Pancreas (tissue), 10 donors: ENCODE measurements at regions of chr22 and their contacts with region 1.

Region 1: GRCh38 chr22:36454916-36455570 is 26.4 kb downstream of the TXN2 start:
- DNase-seq: peak; percentile 92 to 97 (median 95)
- ATAC-seq: peak; percentile 67 to 85 (median 78)
- H3K4me3 ChIP-seq: peak overlapping the region; percentile 14 to 56 (median 30)
- H3K27ac ChIP-seq: peak overlapping the region; percentile 74 to 98 (median 93)
- H3K4me1 ChIP-seq: peaks cover 20 to 48% (median 26%) of the 10 kb centered on the region in 3 donors
- H3K27me3 ChIP-seq: no peaks in the 10 kb centered on the region
- CTCF ChIP-seq: no peak

Region 2: GRCh38 chr22:36409911-36410756 is 44.9 kb before region 1 on chr22:
- intact Hi-C with region 1: loop called in 1 of 3 experiments (anchors 10 kb)
- DNase-seq: peak; percentile 92 to 99 (median 98)
- ATAC-seq: peak; percentile 92 to 96 (median 94)
- H3K4me3 ChIP-seq: peak overlapping the region in 3 of 4 donors; percentile 7 to 30 (median 28)
- H3K27ac ChIP-seq: peak overlapping the region; percentile 93 to 97 (median 96)
- H3K4me1 ChIP-seq: peaks cover 19 to 28% (median 24%) of the 10 kb centered on the region in 3 donors
- H3K27me3 ChIP-seq: no peaks in the 10 kb centered on the region
- CTCF ChIP-seq: peak in 2 of 4 donors; percentile 32 to 33

Region 3: GRCh38 chr22:36419912-36420761 is 34.9 kb before region 1 on chr22:
- intact Hi-C with region 1: no loop called
- DNase-seq: no peak
- ATAC-seq: peak in 1 of 4 donors; percentile 5
- H3K4me3 ChIP-seq: no peak overlapping the region
- H3K27ac ChIP-seq: peak overlapping the region in 3 of 4 donors; percentile 26 to 71 (median 66)
- H3K4me1 ChIP-seq: peaks cover 0 to 29% (median 6%) of the 10 kb centered on the region in 3 donors
- H3K27me3 ChIP-seq: no peaks in the 10 kb centered on the region
- CTCF ChIP-seq: no peak